ENCODE measurements at regions of chr19 and their contacts with region 1.

Region 1: GRCh38 chr19:46932346-46932745 is 71.5 kb downstream of the ARHGAP35 start:
- DNase-seq: no peak
- ATAC-seq: no peak
- H3K4me3 ChIP-seq: no peak overlapping the region
- H3K4me3 Mint-ChIP-seq: no peak overlapping the region
- H3K27ac ChIP-seq: no peak overlapping the region
- H3K27ac Mint-ChIP-seq: no peak overlapping the region
- H3K4me1 ChIP-seq: peaks cover 10 to 15% of the 10 kb centered on the region in 2 donors
- H3K4me1 Mint-ChIP-seq: peaks cover 40% of the 10 kb centered on the region
- H3K27me3 ChIP-seq: no peaks in the 10 kb centered on the region
- H3K27me3 Mint-ChIP-seq: no peaks in the 10 kb centered on the region
- CTCF ChIP-seq: no peak

Region 2: DNA sequence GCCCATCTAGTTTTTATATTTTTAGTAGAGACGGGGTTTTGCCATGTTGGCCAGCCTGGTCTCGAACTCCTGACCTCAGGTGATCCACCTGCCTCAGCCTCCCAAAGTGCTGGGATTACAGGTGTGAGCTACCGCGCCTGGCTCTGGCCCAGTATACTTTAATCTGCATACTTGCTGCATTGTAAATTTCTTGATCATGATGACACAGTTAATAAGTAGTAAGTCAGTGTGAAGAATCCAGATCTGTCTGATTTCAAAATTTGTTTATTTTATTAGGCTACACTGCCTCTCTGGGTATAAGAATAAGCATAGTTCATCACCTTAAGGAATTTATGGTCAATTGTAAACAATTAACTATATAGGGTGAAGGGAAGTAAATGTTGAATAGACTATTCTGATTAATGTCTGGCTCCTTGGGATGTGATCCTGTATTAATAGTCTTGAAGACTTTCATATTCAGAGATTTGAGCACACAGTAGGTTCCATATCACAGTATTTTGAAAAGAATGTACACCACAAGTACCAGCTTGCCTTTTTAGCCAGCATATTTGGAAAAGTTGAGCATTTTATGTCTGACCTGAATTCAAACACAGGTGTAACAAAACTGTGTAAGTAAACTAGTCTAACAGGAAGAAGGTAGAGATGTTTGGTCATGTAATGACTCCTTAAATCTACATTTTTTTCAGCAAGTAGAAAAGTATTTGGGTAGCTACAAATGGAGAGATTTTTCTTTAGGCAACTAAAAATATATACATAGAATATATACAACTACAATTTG is 64.1 kb before region 1 on chr19:
- CTCF ChIA-PET with region 1: no interaction called
- POLR2A ChIA-PET with region 1: interaction called, 11 read pairs
- intact Hi-C with region 1: no loop called
- DNase-seq: no peak
- ATAC-seq: no peak
- H3K4me3 ChIP-seq: no peak overlapping the region
- H3K4me3 Mint-ChIP-seq: no peak overlapping the region
- H3K27ac ChIP-seq: no peak overlapping the region
- H3K27ac Mint-ChIP-seq: no peak overlapping the region
- H3K4me1 ChIP-seq: peaks cover 2 to 9% of the 10 kb centered on the region in 2 donors
- H3K4me1 Mint-ChIP-seq: peaks cover 29% of the 10 kb centered on the region
- H3K27me3 ChIP-seq: no peaks in the 10 kb centered on the region
- H3K27me3 Mint-ChIP-seq: no peaks in the 10 kb centered on the region
- CTCF ChIP-seq: no peak

Measured in B cell (primary cell).